Calu3 (cell line): ENCODE measurements at regions of chr7 and their contacts with region 1.

Region 1: DNA sequence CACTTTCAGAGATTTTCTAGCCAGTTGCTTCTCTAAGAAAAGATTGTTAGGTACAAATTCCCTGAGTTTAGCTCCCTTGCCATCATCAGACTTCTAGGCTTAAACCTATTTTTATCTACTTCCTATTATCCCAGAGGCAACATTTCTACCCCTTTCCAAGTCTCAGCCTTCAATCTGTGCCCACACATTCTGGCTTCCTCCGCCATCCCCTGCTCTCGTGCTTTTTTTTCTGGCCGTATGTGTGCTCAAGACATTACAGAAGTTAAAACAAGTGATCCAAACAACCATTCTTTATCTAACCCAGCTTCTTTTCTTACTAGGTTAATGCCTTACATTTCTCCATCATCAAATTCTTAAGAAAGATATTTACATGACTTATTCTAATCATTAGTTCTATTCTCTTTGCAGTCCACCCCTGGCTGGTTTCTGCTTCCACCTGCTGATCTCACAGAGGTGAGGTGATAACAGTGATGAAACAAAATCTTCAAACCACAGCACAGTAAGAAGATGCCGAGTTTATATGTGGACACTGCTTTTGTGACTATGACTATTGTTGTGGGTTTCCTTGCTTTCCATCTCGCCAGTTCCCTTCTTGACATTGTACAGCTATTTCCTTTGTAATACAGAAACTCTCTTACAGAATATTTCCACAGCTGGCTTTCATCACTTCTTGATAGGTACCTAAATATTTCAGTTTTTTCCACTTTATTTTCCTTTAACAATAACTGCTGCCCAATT is 18.3 kb upstream of the CDK6 start:
- DNase-seq: no peak
- H3K4me3 Mint-ChIP-seq: no peak overlapping the region
- H3K27ac Mint-ChIP-seq: no peak overlapping the region
- H3K4me1 Mint-ChIP-seq: no peaks in the 10 kb centered on the region
- H3K27me3 Mint-ChIP-seq: no peaks in the 10 kb centered on the region
- CTCF ChIP-seq: no peak

Region 2: GRCh38 chr7:92598310-92598981 is 256.2 kb before region 1 on chr7:
- CTCF ChIA-PET with region 1: no interaction called
- intact Hi-C with region 1: no loop called
- DNase-seq: no peak
- H3K4me3 Mint-ChIP-seq: no peak overlapping the region
- H3K27ac Mint-ChIP-seq: no peak overlapping the region
- H3K4me1 Mint-ChIP-seq: no peaks in the 10 kb centered on the region
- H3K27me3 Mint-ChIP-seq: no peaks in the 10 kb centered on the region
- CTCF ChIP-seq: no peak

Region 3: GRCh38 chr7:92916674-92917224 is 62.1 kb after region 1 on chr7:
- CTCF ChIA-PET with region 1: no interaction called
- intact Hi-C with region 1: loop called (anchors 10 kb)
- DNase-seq: peak; percentile 58
- H3K4me3 Mint-ChIP-seq: no peak overlapping the region
- H3K27ac Mint-ChIP-seq: no peak overlapping the region
- H3K4me1 Mint-ChIP-seq: peaks cover 9% of the 10 kb centered on the region
- H3K27me3 Mint-ChIP-seq: no peaks in the 10 kb centered on the region
- CTCF ChIP-seq: no peak